ENCODE measurements at regions of chr7 and their contacts with region 1.

Region 1: GRCh38 chr7:91784463-91784862 is 96.0 kb downstream of the MTERF1 start:
- DNase-seq: no peak
- ATAC-seq: peak in 3 of 8 donors; percentile 42 to 61 (median 46)
- H3K4me3 ChIP-seq: no peak overlapping the region
- H3K27ac ChIP-seq: no peak overlapping the region
- H3K4me1 ChIP-seq: no peaks in the 10 kb centered on the region
- H3K27me3 ChIP-seq: no peaks in the 10 kb centered on the region
- CTCF ChIP-seq: peak in 7 of 9 donors; percentile 25 to 63 (median 57)

Region 2: GRCh38 chr7:91082852-91083495 is 701.5 kb before region 1 on chr7:
- intact Hi-C with region 1: loop called in 9 of 10 experiments (anchors 2 to 10 kb)
- DNase-seq: no peak
- ATAC-seq: peak in 2 of 8 donors; percentile 45 to 60
- H3K4me3 ChIP-seq: no peak overlapping the region
- H3K27ac ChIP-seq: peak overlapping the region in 6 of 10 donors; percentile 43 to 68 (median 51)
- H3K4me1 ChIP-seq: peaks cover 3 to 42% (median 24%) of the 10 kb centered on the region in 9 donors
- H3K27me3 ChIP-seq: no peaks in the 10 kb centered on the region
- CTCF ChIP-seq: peak; percentile 27 to 72 (median 59)

Region 3: DNA sequence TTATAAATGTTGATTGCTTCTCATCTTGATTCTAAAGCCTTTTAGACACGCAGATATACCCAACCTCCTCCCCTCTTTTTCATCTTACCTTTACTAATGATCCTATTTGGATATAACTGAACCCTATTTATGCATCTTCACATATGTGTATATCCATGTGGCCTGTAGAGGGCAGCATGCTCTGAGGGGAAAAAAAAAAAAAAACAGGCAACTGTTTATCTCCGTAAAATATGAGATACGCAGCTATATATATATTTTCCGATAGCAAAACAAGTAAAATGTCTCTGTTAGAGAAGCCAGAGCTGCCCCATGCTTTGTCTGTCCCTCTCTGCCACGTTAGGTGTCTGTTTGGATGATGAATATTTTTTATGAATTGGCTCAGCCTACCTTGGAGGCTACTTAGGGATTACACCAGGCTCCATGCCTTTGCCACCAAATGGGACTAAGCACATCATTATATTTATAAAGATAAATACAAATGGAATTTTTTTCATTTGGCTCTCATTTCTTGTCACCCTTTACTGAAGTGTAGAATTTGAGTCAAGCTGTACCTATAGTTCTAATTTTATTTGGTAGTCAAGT is 695.0 kb before region 1 on chr7:
- intact Hi-C with region 1: loop called in 8 of 10 experiments (anchors 5 to 10 kb)
- DNase-seq: no peak
- ATAC-seq: peak; percentile 28 to 73 (median 64)
- H3K4me3 ChIP-seq: peak overlapping the region in 7 of 10 donors; percentile 6 to 44 (median 36)
- H3K27ac ChIP-seq: peak overlapping the region in 4 of 10 donors; percentile 29 to 62 (median 40)
- H3K4me1 ChIP-seq: peaks cover 0 to 21% (median 9%) of the 10 kb centered on the region in 9 donors
- H3K27me3 ChIP-seq: no peaks in the 10 kb centered on the region
- CTCF ChIP-seq: peak; percentile 63 to 89 (median 82)

Region 4: GRCh38 chr7:91280185-91280584 is 504.3 kb before region 1 on chr7:
- intact Hi-C with region 1: loop called in 2 of 10 experiments (anchors 5 to 10 kb)
- DNase-seq: no peak
- ATAC-seq: no peak
- H3K4me3 ChIP-seq: no peak overlapping the region
- H3K27ac ChIP-seq: no peak overlapping the region
- H3K4me1 ChIP-seq: no peaks in the 10 kb centered on the region
- H3K27me3 ChIP-seq: no peaks in the 10 kb centered on the region
- CTCF ChIP-seq: no peak

Region 5: GRCh38 chr7:91288208-91288824 is 496.1 kb before region 1 on chr7:
- intact Hi-C with region 1: loop called in 2 of 10 experiments (anchors 5 to 10 kb)
- DNase-seq: peak; percentile 23 to 35
- ATAC-seq: peak in 3 of 8 donors; percentile 51 to 62 (median 57)
- H3K4me3 ChIP-seq: no peak overlapping the region
- H3K27ac ChIP-seq: no peak overlapping the region
- H3K4me1 ChIP-seq: peaks cover 0 to 13% (median 0%) of the 10 kb centered on the region in 9 donors
- H3K27me3 ChIP-seq: no peaks in the 10 kb centered on the region
- CTCF ChIP-seq: peak in 7 of 9 donors; percentile 44 to 60 (median 53)

Region 6: GRCh38 chr7:91880413-91881241 is 96.2 kb after region 1 on chr7 and contains the start of gene MTERF1:
- intact Hi-C with region 1: no loop called
- DNase-seq: peak; percentile 93
- ATAC-seq: peak; percentile 97 to 100 (median 99)
- H3K4me3 ChIP-seq: peak within 1 kb of the TSS; percentile 59 to 91 (median 80)
- H3K27ac ChIP-seq: peak within 1 kb of the TSS in 9 of 10 donors; percentile 8 to 84 (median 46)
- H3K4me1 ChIP-seq: peaks cover 0 to 29% (median 23%) of the 10 kb centered on the region in 9 donors
- H3K27me3 ChIP-seq: no peaks in the 10 kb centered on the region
- CTCF ChIP-seq: peak; percentile 89 to 100 (median 95)
- total RNA-seq, gene MTERF1: 5.9 to 9.9 (median 7.1) TPM